ENCODE measurements at regions of chr1 and their contacts with region 1.

Region 1: GRCh38 chr1:199113265-199113869 is 474.5 kb downstream of the PTPRC start:
- DNase-seq: peak; percentile 66
- ATAC-seq: peak; percentile 41
- H3K4me3 ChIP-seq: no peak overlapping the region
- H3K4me3 Mint-ChIP-seq: no peak overlapping the region
- H3K27ac ChIP-seq: no peak overlapping the region
- H3K27ac Mint-ChIP-seq: no peak overlapping the region
- H3K4me1 ChIP-seq: peaks cover 3 to 6% of the 10 kb centered on the region in 2 donors
- H3K4me1 Mint-ChIP-seq: peaks cover 7% of the 10 kb centered on the region
- H3K27me3 ChIP-seq: no peaks in the 10 kb centered on the region
- H3K27me3 Mint-ChIP-seq: no peaks in the 10 kb centered on the region
- CTCF ChIP-seq: peak; percentile 66

Region 2: DNA sequence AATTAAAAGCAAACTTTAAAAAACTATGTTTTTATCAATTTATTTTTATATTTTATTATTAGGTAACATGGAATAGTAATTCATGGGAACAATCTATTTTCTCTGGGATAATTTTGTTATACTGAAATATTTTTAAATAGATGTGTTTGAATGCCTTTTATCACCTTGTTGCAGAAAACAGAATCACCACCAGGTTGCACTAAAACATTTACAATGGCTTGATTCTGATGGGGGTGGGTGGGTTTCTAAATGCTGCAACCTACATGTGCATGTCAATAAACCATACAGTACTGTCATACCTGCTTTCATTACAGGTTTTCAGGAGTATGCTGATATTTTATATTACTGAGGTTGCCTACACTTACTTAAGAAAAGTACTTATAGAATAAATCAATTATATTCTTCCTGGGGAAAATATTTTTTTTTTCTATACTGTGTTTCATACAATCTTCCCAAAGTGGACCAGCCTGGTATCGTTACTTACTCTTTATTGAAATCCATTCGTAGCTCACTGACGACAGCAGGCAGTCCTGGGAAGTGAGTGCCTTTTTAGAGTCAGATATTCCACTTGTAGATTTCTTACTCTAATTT is 341.7 kb before region 1 on chr1:
- CTCF ChIA-PET with region 1: interaction called, 12 read pairs
- POLR2A ChIA-PET with region 1: no interaction called
- intact Hi-C with region 1: loop called (anchors 5 kb)
- DNase-seq: peak; percentile 50
- ATAC-seq: no peak
- H3K4me3 ChIP-seq: no peak overlapping the region
- H3K4me3 Mint-ChIP-seq: no peak overlapping the region
- H3K27ac ChIP-seq: no peak overlapping the region
- H3K27ac Mint-ChIP-seq: no peak overlapping the region
- H3K4me1 ChIP-seq: no peaks in the 10 kb centered on the region
- H3K4me1 Mint-ChIP-seq: no peaks in the 10 kb centered on the region
- H3K27me3 ChIP-seq: no peaks in the 10 kb centered on the region
- H3K27me3 Mint-ChIP-seq: no peaks in the 10 kb centered on the region
- CTCF ChIP-seq: peak; percentile 71

Region 3: DNA sequence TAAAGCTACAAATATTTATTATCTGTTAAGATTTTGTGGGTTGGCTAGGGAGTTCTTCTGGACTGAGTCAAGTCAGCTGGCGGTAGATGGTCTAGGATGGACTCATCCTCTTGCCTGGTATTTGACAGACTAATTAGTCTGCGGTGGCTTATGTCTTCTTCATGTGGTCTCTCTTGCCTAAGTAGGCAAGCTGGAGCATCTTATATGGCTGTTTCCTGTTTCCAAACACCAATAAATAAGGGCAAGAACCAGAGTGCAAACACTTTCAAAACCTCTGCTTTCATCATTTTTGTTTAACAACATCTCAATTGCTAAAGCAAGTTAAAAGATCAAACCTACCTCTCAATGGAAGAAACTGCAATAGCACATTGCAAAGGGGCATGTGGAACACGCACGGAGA is 10.2 kb after region 1 on chr1:
- CTCF ChIA-PET with region 1: interaction called, 12 read pairs
- POLR2A ChIA-PET with region 1: no interaction called
- intact Hi-C with region 1: no loop called
- DNase-seq: no peak
- ATAC-seq: no peak
- H3K4me3 ChIP-seq: no peak overlapping the region
- H3K4me3 Mint-ChIP-seq: no peak overlapping the region
- H3K27ac ChIP-seq: no peak overlapping the region
- H3K27ac Mint-ChIP-seq: no peak overlapping the region
- H3K4me1 ChIP-seq: no peaks in the 10 kb centered on the region
- H3K4me1 Mint-ChIP-seq: no peaks in the 10 kb centered on the region
- H3K27me3 ChIP-seq: no peaks in the 10 kb centered on the region
- H3K27me3 Mint-ChIP-seq: peaks cover 4% of the 10 kb centered on the region
- CTCF ChIP-seq: no peak

Region 4: DNA sequence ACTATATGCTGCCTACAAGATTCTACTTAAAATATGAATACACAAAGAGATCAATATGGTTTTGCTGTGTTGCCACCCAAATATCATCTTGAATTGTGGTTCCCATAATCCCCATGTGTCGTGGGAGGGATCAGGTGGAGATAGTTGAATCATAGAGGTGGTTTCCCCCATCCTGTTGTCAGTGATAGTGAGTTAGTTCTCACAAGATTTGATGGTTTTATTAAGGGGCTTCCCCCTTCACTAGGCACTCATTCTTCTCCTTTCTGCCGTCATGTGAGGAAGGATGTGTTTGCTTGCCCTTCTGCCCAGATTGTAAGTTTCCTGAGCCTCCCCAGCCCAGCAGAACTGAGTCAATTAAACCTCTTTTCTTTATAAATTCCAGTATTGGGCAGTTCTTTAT is 259.8 kb after region 1 on chr1:
- CTCF ChIA-PET with region 1: no interaction called
- POLR2A ChIA-PET with region 1: no interaction called
- intact Hi-C with region 1: no loop called
- DNase-seq: no peak
- ATAC-seq: no peak
- H3K4me3 ChIP-seq: no peak overlapping the region
- H3K4me3 Mint-ChIP-seq: no peak overlapping the region
- H3K27ac ChIP-seq: no peak overlapping the region
- H3K27ac Mint-ChIP-seq: no peak overlapping the region
- H3K4me1 ChIP-seq: no peaks in the 10 kb centered on the region
- H3K4me1 Mint-ChIP-seq: no peaks in the 10 kb centered on the region
- H3K27me3 ChIP-seq: no peaks in the 10 kb centered on the region
- H3K27me3 Mint-ChIP-seq: no peaks in the 10 kb centered on the region
- CTCF ChIP-seq: no peak

Measured in B cell (primary cell).